ENCODE measurements at regions of chrX and their contacts with region 1.

Region 1: GRCh38 chrX:135521405-135522189 is 1.1 kb downstream of the INTS6L start:
- DNase-seq: peak; percentile 92
- ATAC-seq: peak; percentile 73
- H3K4me3 Mint-ChIP-seq: peak overlapping the region; percentile 99
- H3K27ac Mint-ChIP-seq: peak overlapping the region; percentile 90
- H3K4me1 Mint-ChIP-seq: peaks cover 40% of the 10 kb centered on the region
- H3K27me3 Mint-ChIP-seq: no peaks in the 10 kb centered on the region

Region 2: GRCh38 chrX:135003876-135004623 is 517.5 kb before region 1 on chrX:
- CTCF ChIA-PET with region 1: no interaction called
- POLR2A ChIA-PET with region 1: no interaction called
- intact Hi-C with region 1: loop called in 1 of 2 experiments (anchors 5 kb)
- DNase-seq: peak; percentile 94
- ATAC-seq: peak; percentile 98
- H3K4me3 Mint-ChIP-seq: peak overlapping the region; percentile 78
- H3K27ac Mint-ChIP-seq: peak overlapping the region; percentile 69
- H3K4me1 Mint-ChIP-seq: peaks cover 14% of the 10 kb centered on the region
- H3K27me3 Mint-ChIP-seq: no peaks in the 10 kb centered on the region

Region 3: GRCh38 chrX:135432881-135433521 is 88.6 kb before region 1 on chrX:
- CTCF ChIA-PET with region 1: no interaction called
- POLR2A ChIA-PET with region 1: no interaction called
- intact Hi-C with region 1: loop called in 1 of 2 experiments (anchors 5 kb)
- DNase-seq: no peak
- ATAC-seq: no peak
- H3K4me3 Mint-ChIP-seq: no peak overlapping the region
- H3K27ac Mint-ChIP-seq: no peak overlapping the region
- H3K4me1 Mint-ChIP-seq: peaks cover 9% of the 10 kb centered on the region
- H3K27me3 Mint-ChIP-seq: peaks cover 4% of the 10 kb centered on the region

Region 4: DNA sequence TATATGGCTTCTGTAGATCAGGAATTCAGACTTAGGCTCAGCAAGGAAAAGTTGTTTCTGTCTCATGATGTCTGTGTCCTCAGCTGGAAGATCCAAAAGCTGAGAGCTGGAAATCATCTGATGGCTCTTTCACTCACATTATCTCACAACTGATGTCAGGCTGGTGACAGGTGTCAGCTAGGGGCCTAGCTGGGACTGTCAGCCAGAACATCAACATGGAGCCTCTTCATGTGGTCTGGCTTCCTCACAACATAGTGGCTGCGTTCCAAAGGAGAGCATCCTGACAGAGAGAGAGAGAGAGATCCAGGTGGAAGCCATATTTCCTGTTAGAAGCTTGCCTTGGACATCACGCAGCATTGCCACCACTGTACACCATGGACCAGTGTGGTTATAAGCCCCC is 11.7 kb before region 1 on chrX:
- CTCF ChIA-PET with region 1: no interaction called
- POLR2A ChIA-PET with region 1: no interaction called
- intact Hi-C with region 1: no loop called
- DNase-seq: no peak
- ATAC-seq: no peak
- H3K4me3 Mint-ChIP-seq: no peak overlapping the region
- H3K27ac Mint-ChIP-seq: no peak overlapping the region
- H3K4me1 Mint-ChIP-seq: no peaks in the 10 kb centered on the region
- H3K27me3 Mint-ChIP-seq: no peaks in the 10 kb centered on the region

Region 5: DNA sequence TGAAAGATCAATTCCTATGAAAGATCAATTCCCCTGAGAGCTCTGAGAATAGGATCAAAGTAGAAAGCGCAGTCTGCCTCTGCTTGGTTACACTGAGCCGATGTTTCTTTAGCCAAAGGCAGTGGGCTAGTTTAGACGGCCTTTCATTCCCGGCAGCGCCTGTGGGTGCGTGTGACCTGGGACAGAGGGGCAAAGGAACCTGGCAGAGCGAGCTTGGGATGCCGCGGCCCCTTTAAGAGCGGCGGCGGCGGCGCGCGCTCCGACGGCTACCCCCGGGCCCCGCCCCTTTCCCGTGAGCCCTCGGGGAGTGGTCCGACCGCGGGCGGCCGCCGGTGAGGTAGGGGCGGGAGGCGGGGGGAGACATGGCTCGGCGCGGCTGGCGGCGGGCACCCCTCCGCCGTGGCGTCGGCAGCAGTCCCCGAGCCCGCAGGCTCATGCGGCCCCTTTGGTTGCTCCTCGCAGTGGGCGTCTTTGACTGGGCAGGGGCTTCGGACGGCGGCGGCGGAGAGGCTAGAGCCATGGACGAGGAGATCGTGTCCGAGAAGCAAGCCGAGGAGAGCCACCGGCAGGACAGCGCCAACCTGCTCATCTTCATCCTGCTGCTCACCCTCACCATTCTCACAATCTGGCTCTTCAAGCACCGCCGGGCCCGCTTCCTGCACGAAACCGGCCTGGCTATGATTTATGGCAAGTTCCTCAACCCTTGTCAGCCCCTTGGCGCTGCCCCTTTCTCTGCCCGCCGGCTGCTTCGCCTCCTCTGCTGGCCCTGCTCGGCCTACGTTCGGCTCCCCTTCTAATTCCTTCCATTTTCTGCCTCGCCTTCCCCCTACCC is 463.8 kb after region 1 on chrX and contains the start of gene SLC9A6:
- CTCF ChIA-PET with region 1: no interaction called
- POLR2A ChIA-PET with region 1: no interaction called
- intact Hi-C with region 1: loop called in 1 of 2 experiments (anchors 5 kb)
- DNase-seq: peak; percentile 81
- ATAC-seq: peak; percentile 82
- H3K4me3 Mint-ChIP-seq: peak within 1 kb of the TSS; percentile 88
- H3K27ac Mint-ChIP-seq: peak within 1 kb of the TSS; percentile 90
- H3K4me1 Mint-ChIP-seq: peaks cover 51% of the 10 kb centered on the region
- H3K27me3 Mint-ChIP-seq: no peaks in the 10 kb centered on the region
- total RNA-seq, gene SLC9A6: 11.8 to 12.6 TPM

Region 6: GRCh38 chrX:136496770-136497598 is 975.4 kb after region 1 on chrX and contains the start of gene HTATSF1:
- CTCF ChIA-PET with region 1: no interaction called
- POLR2A ChIA-PET with region 1: no interaction called
- intact Hi-C with region 1: loop called in 1 of 2 experiments (anchors 5 kb)
- DNase-seq: peak; percentile 92
- ATAC-seq: peak; percentile 76
- H3K4me3 Mint-ChIP-seq: peak within 1 kb of the TSS; percentile 83
- H3K27ac Mint-ChIP-seq: peak within 1 kb of the TSS; percentile 92
- H3K4me1 Mint-ChIP-seq: peaks cover 18% of the 10 kb centered on the region
- H3K27me3 Mint-ChIP-seq: no peaks in the 10 kb centered on the region
- total RNA-seq, gene HTATSF1: 34.8 to 42.3 TPM